WTC11 (cell line): ENCODE measurements at regions of chr13 and their contacts with region 1.

Region 1: DNA sequence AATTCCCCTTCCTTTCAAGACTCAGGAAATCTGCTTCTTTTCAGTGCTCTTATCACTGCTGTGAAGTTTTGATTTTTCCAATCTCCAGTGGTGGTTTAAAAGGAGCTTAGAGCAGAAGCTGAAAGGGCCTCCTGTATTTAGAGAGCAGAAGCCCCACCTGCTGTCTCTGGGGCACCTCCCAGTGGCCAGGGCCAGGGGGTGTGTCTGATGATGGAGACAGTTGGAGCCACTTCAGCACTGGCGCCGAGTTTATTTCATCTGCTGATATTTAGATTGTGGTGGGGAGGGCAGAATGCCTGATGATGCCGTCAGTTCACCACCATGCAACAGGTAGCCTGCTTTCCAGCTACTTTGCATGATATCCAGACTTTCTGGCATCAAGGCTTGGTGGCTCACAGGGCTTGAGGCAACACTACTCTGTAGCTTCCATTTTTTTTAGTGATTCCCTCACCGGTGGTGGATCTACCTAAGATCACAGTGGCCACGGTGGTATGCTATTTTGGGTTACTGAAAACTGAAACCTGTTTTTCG is 371.9 kb downstream of the KCNRG start:
- DNase-seq: peak; percentile 66
- ATAC-seq: peak; percentile 88
- H3K4me3 Mint-ChIP-seq: peak overlapping the region; percentile 55; the same call in 1 of the 2 replicates
- H3K27ac Mint-ChIP-seq: peak overlapping the region; percentile 93
- H3K4me1 Mint-ChIP-seq: peaks cover 83% of the 10 kb centered on the region
- H3K27me3 Mint-ChIP-seq: no peaks in the 10 kb centered on the region
- CTCF ChIP-seq: no peak

Region 2: DNA sequence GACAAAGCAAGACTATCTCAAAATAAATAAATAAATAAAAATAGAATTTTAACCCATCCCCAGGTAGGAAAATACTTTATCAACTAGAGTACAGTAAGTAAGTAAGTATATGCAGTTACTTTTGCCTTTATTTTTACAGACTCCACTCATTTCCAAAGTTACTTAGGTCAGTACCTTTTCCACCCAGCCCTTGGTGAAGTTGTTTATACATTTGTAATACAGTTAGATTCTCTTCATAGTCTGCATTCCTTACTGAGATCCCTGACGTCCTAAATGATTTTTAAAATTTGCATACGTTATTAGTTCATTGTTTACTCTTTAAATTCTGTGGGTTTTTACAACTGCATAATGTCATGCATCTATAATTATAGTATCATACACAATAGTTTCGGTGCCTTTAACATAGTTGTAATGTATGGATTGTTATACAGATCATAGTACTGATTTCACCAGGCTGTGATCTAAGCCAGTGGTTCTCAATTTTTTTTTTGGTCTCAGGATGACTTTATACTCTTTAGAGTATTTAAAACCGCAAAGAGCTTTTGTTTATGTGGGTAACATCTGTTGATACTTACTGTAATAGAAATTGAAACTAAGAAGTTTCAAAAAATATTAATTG is 932.6 kb before region 1 on chr13:
- CTCF ChIA-PET with region 1: no interaction called
- POLR2A ChIA-PET with region 1: no interaction called
- DNase-seq: no peak
- ATAC-seq: no peak
- H3K4me3 Mint-ChIP-seq: no peak overlapping the region
- H3K27ac Mint-ChIP-seq: no peak overlapping the region
- H3K4me1 Mint-ChIP-seq: no peaks in the 10 kb centered on the region
- H3K27me3 Mint-ChIP-seq: no peaks in the 10 kb centered on the region
- CTCF ChIP-seq: no peak

Region 3: GRCh38 chr13:49976314-49977258 is 410.5 kb before region 1 on chr13:
- CTCF ChIA-PET with region 1: interaction called, 12 read pairs
- POLR2A ChIA-PET with region 1: no interaction called
- DNase-seq: peak; percentile 76
- ATAC-seq: peak; percentile 89
- H3K4me3 Mint-ChIP-seq: no peak overlapping the region
- H3K27ac Mint-ChIP-seq: no peak overlapping the region
- H3K4me1 Mint-ChIP-seq: 0 out of 2 replicates have a peak, but pooled peaks cover 5% of the 10 kb centered on the region
- H3K27me3 Mint-ChIP-seq: no peaks in the 10 kb centered on the region; the same call in 1 of the 2 replicates
- CTCF ChIP-seq: peak; percentile 95

Region 4: GRCh38 chr13:50123862-50124536 is 263.1 kb before region 1 on chr13:
- CTCF ChIA-PET with region 1: interaction called, 10 read pairs
- POLR2A ChIA-PET with region 1: no interaction called
- DNase-seq: peak; percentile 87
- ATAC-seq: peak; percentile 33
- H3K4me3 Mint-ChIP-seq: peak overlapping the region; percentile 78
- H3K27ac Mint-ChIP-seq: no peak overlapping the region
- H3K4me1 Mint-ChIP-seq: peaks cover 52% of the 10 kb centered on the region
- H3K27me3 Mint-ChIP-seq: peaks cover 80% of the 10 kb centered on the region
- CTCF ChIP-seq: no peak

Region 5: DNA sequence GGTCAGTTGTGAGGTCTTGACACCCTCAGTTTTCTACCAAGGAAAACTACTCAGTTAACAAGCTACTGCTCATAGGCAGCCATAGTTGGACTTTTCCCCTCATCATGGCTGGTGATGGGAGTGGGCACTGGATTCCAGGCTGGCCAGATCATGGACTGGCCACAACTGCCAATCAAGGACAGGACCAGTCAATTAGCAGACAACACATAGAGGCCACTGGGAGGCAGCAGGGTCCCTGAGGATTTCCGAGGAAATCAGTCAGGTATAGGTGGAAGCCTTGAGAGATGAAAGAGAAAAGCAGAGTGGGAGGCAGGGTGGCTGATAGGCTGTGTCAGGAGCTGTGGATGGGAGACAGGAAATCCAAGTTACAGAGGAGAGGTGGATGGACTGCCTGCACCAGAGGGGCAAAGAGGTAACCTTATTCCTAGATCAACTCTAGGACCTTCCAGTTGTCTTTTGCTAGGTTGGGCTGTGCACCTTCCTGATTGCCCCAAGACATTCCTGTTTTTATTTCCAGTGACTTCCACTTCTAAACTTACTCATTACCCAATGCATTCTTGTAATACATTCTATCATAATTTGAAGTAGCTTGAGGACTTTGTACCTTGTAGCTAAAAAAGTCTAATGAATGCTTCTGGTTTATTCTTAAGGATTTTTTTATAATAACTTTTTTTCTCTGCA is 10.1 kb before region 1 on chr13:
- CTCF ChIA-PET with region 1: interaction called, 18 read pairs
- POLR2A ChIA-PET with region 1: interaction called, 6 read pairs
- DNase-seq: peak; percentile 50
- ATAC-seq: peak; percentile 86
- H3K4me3 Mint-ChIP-seq: no peak overlapping the region
- H3K27ac Mint-ChIP-seq: peak overlapping the region; percentile 32; the same call in 1 of the 2 replicates
- H3K4me1 Mint-ChIP-seq: peaks cover 62% of the 10 kb centered on the region
- H3K27me3 Mint-ChIP-seq: no peaks in the 10 kb centered on the region
- CTCF ChIP-seq: no peak

Region 6: DNA sequence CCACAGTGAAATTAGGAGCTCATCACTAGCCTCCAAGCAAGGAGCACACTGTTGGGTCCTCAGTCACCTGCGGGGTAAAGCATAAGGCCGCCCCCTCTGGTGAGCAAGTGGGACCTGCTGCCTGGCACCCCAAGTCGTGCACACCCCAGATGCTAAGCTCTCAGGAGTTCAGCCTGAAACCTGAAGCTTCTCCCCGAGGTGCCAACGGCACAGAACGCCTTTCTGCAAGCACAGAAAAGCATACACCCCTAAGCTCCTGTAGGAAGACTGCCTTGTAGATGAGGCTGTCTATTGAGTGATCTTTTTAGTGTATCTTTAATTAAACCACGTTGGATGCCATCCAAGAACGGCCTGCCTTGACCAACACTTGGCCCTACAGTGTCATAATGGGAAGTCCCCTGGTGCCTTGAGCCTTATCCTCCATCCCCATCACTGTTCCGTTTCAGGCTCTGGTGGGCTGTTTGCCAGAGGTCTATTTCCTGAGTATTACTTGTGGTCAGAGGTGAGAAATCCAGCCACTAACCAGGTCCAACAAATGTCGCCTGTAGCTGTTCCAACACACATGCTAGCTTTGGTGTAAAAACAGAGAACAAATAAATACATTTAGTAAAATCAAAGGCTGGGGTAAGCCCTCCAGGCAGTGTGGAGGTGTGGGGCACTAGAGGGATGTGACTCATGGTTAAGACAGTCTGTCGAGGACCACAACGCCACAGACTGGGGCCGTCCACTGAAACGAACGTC is 679.1 kb after region 1 on chr13:
- CTCF ChIA-PET with region 1: no interaction called
- POLR2A ChIA-PET with region 1: no interaction called
- DNase-seq: no peak
- ATAC-seq: no peak; the same call in 1 of the 2 replicates
- H3K4me3 Mint-ChIP-seq: no peak overlapping the region
- H3K27ac Mint-ChIP-seq: no peak overlapping the region
- H3K4me1 Mint-ChIP-seq: peaks cover 18% of the 10 kb centered on the region
- H3K27me3 Mint-ChIP-seq: no peaks in the 10 kb centered on the region
- CTCF ChIP-seq: no peak